ENCODE measurements at regions of chr12 and their contacts with region 1.

Region 1: GRCh38 chr12:123983822-123984485 is 10.9 kb downstream of the ZNF664 start:
- DNase-seq: peak; percentile 60
- H3K4me3 Mint-ChIP-seq: no peak overlapping the region
- H3K27ac Mint-ChIP-seq: no peak overlapping the region
- H3K4me1 Mint-ChIP-seq: peaks cover 15% of the 10 kb centered on the region
- H3K27me3 Mint-ChIP-seq: no peaks in the 10 kb centered on the region

Region 2: GRCh38 chr12:123912415-123913380 is 71.3 kb before region 1 on chr12:
- CTCF ChIA-PET with region 1: interaction called, 10 read pairs
- POLR2A ChIA-PET with region 1: no interaction called
- intact Hi-C with region 1: no loop called
- DNase-seq: no peak
- H3K4me3 Mint-ChIP-seq: no peak overlapping the region
- H3K27ac Mint-ChIP-seq: no peak overlapping the region
- H3K4me1 Mint-ChIP-seq: peaks cover 12% of the 10 kb centered on the region
- H3K27me3 Mint-ChIP-seq: no peaks in the 10 kb centered on the region